Heart right ventricle (tissue), 16 donors: ENCODE measurements at regions of chr17 and their contacts with region 1.

Region 1: DNA sequence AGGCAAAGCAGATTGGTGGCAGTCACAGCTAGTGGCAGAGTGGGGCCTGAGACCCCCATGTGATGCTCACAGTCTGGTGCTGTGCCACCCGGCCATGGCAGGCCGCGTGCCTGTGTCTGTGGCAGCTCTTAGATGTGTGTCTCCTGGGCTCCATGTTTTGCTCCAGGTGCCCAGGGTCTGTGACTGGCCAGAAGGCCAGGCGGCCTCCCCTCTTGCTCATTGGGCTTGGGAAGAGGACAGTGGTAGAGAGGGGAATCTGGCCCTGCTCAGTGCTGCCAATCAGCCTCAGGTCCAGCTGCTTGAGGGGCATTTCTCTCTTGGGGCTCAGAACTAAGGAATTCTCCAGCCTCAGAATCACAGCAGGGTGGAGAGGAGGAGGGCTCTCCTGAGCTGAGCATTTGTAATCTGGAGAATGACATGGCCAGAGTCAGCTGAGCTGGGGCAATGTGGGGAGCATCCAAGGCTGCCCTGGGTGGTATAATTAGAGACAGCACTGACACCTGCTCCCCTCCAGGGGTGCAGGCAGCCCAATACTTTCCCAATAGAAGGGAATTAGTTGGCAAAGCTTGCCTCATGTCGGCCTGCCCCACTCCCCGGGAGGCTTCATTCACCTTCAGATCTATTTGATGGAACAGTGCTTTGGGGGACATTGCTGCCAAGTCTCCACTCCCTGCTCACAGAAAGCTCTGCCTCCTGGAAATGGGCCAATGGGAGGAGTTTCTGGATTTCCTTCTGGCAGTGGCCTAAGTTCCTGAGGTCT is 2.7 kb upstream of the LASP1NB start:
- DNase-seq: peak; percentile 34 to 91
- ATAC-seq: peak; percentile 36 to 67 (median 55)
- H3K4me3 ChIP-seq: no peak overlapping the region
- H3K27ac ChIP-seq: peak overlapping the region; percentile 1 to 78 (median 50)
- H3K4me1 ChIP-seq: peaks cover 13 to 77% (median 54%) of the 10 kb centered on the region in 9 donors
- H3K27me3 ChIP-seq: no peaks in the 10 kb centered on the region
- CTCF ChIP-seq: peak in 3 of 9 donors; percentile 8 to 24 (median 17)

Region 2: DNA sequence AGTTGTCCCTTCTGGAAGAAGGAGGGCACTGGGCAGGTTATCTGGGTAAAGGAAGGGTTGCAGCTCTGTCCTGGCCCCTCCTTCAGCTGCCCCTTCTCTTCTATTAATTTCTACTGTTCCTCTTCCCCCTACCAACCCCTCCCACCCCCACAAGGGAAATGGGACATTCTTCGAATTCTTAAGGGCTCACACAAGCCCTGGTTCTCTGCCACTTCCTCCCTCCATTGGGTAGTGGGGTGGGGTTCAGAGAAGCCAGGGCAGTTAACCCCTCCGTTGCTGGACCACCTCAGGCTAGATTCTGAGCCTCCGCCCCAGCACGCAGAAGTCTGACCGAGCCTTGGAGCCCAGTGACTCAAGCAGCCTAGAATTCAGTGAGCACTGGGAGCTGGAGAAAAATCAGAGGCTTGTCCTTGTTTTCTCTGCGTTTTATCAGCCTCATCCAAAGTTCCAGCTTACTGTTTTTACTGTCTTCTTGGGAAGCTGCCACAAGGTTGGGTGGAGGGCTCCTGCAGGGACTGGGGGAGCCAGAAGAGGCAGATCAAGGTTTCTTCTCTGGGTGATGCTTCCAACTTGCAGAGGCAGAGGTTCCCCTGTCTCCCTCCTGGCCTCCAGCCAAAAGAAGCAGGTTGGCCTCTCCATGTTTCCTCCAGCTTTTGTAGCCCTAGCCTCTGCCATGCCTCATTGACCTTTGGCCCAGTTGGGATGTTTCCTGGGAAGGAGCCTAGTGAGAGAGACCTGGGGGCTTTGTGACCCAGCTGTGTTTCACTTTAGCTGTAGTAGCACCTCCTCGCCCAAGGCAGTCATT is 42.6 kb before region 1 on chr17:
- intact Hi-C with region 1: loop called in 1 of 10 experiments (anchors 2 kb)
- DNase-seq: peak; percentile 32 to 55
- ATAC-seq: peak in 7 of 8 donors; percentile 32 to 65 (median 52)
- H3K4me3 ChIP-seq: peak overlapping the region in 6 of 10 donors; percentile 0 to 19 (median 5)
- H3K27ac ChIP-seq: peak overlapping the region; percentile 33 to 81 (median 68)
- H3K4me1 ChIP-seq: peaks cover 46 to 97% (median 93%) of the 10 kb centered on the region in 9 donors
- H3K27me3 ChIP-seq: no peaks in the 10 kb centered on the region
- CTCF ChIP-seq: no peak